ENCODE measurements at regions of chr11 and their contacts with region 1.

Region 1: DNA sequence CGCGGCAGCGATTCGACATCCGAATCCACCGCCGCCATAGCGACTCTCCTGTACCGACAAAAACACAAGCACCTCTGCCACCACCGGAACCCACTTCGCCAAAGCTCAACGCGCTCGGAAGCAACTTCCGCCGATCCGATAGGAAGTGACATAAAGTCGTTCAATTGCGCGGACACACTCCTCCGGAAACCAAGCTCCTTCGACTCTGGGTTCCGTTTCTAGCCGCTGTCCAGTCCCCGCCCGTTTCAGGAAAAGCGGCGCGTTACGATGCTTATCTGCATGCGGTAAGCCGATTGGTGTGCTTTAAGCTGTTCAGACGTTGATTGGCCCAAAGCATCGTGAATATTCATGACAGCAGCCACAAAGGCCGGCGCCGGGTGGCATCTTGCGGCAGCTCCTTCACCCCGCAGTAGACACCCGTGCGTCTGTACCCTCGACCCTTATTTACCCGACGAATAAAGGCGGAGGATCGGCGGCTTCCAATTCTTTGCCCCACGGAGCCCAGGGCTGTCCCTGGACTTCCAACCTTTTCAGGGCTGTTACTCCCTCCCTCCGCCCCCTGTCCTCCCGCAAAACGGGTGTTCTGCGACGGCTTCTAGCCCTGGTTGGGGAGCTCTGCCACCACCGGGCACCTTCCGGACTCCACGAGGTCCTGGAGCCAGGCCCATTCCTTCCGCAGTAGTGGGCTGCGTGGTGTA is at the start of gene TUT1:
- DNase-seq: peak; percentile 98
- ATAC-seq: peak; percentile 91
- H3K4me3 Mint-ChIP-seq: peak within 1 kb of the TSS; percentile 100
- H3K27ac Mint-ChIP-seq: peak within 1 kb of the TSS; percentile 98
- H3K4me1 Mint-ChIP-seq: peaks cover 49% of the 10 kb centered on the region
- H3K27me3 Mint-ChIP-seq: no peaks in the 10 kb centered on the region
- CTCF ChIP-seq: no peak
- total RNA-seq, gene TUT1: 34.4 to 38.0 TPM

Region 2: GRCh38 chr11:62444236-62444833 is 147.3 kb before region 1 on chr11:
- CTCF ChIA-PET with region 1: no interaction called
- POLR2A ChIA-PET with region 1: no interaction called
- intact Hi-C with region 1: no loop called
- DNase-seq: peak; percentile 36
- ATAC-seq: peak; percentile 30
- H3K4me3 Mint-ChIP-seq: peak overlapping the region; percentile 63
- H3K27ac Mint-ChIP-seq: no peak overlapping the region
- H3K4me1 Mint-ChIP-seq: peaks cover 9% of the 10 kb centered on the region
- H3K27me3 Mint-ChIP-seq: peaks cover 17% of the 10 kb centered on the region
- CTCF ChIP-seq: no peak

Region 3: DNA sequence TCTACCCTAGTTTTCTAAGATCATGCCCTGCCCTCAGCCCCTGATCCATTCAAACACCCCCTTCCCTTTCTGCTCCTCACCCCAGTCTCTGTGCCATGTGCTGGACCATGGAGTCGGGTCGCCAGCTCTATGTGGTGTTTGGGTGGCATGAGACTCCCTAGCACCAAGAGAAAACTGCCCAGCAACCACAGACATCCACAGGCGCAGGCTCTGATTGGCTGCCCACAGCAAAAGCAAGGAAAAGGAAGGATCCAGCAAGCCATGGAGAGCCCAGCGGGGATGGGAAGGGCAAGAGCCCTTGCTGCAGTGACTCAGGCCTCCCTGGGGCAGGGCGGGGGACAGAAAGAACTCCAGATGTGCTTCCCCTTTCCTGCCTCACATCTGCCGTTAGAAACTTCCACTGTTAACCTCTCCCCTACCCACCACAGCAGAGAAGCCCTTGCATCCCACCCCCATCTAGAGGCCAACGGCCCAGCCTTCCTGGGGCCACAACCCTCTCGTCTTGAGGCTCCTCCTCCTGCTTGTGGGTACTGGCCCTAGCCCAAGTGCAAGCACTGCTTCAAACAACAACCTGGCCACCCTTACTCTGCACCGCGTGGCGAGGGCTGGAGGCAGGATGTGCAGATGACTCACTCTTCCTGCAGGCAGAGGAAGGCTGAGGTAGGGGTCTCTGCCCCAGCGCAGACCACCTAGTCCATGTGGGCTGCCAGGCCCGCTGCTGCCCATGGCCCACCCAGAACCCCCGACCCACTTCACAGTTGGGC is 35.3 kb before region 1 on chr11:
- CTCF ChIA-PET with region 1: interaction called, 9 read pairs
- POLR2A ChIA-PET with region 1: interaction called, 17 read pairs
- intact Hi-C with region 1: no loop called
- DNase-seq: peak; percentile 95
- ATAC-seq: peak; percentile 68
- H3K4me3 Mint-ChIP-seq: peak overlapping the region; percentile 41
- H3K27ac Mint-ChIP-seq: peak overlapping the region; percentile 94
- H3K4me1 Mint-ChIP-seq: peaks cover 92% of the 10 kb centered on the region
- H3K27me3 Mint-ChIP-seq: no peaks in the 10 kb centered on the region
- CTCF ChIP-seq: no peak

Region 4: DNA sequence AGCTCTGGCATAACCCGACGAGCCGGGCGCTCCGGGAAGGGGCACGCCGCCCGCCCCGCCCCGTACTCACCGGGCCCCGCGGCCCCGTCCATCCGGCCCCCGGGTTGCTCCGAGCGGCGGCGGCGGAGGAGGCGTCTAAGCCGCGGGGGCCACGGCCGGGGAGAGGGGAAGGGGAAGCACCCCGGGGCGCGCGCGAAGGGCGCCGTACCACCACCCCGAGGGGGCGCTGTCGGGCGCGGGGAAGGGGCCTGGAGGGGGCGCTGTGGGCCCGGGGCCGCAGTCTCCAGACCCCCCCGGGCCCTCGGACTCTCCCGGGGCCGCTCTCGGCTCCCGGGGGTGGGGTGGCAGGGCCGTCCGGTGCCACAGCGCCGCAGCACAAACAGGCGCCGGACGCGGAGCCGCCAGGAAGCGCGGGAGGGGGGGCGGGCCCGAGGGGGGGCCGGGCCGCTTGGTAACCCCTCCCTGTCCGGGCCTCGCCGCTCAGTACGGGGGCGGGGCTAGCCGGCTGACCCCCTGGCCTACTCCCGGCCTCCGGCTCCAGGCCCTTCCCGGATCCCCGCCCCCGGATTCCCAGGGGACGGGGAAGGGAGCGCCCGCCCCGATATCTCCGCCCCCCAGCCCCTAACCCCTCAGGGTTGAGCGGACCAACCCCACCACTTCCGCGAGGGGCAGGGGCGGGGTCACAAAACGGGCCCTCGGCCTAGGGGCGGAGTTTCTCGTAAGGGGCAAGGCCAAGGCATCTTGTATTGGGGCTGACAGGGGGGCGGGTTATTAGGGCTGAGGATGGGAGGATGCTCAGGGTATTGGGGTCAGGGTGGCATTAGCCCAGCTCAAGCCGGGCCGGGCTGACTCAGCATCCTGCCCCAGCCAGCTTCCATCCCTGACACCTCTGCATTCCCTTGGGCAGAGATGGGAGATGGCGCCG is 21.0 kb after region 1 on chr11 and contains the starts of genes EML3 and ROM1:
- CTCF ChIA-PET with region 1: interaction called, 20 read pairs
- POLR2A ChIA-PET with region 1: interaction called, 87 read pairs
- intact Hi-C with region 1: no loop called
- DNase-seq: peak; percentile 92
- ATAC-seq: peak; percentile 80
- H3K4me3 Mint-ChIP-seq: peak within 1 kb of the TSS; percentile 96
- H3K27ac Mint-ChIP-seq: peak within 1 kb of the TSS; percentile 97
- H3K4me1 Mint-ChIP-seq: peaks cover 52% of the 10 kb centered on the region
- H3K27me3 Mint-ChIP-seq: no peaks in the 10 kb centered on the region
- CTCF ChIP-seq: peak; percentile 99
- total RNA-seq, gene EML3: 115 to 120 TPM
- total RNA-seq, gene ROM1: 0.79 to 1.1 TPM

Region 5: GRCh38 chr11:62645956-62646824 is 54.6 kb after region 1 on chr11 and contains the start of gene GANAB:
- CTCF ChIA-PET with region 1: interaction called, 3 read pairs
- POLR2A ChIA-PET with region 1: interaction called, 29 read pairs
- intact Hi-C with region 1: no loop called
- DNase-seq: peak; percentile 100
- ATAC-seq: peak; percentile 98
- H3K4me3 Mint-ChIP-seq: peak within 1 kb of the TSS; percentile 100
- H3K27ac Mint-ChIP-seq: peak within 1 kb of the TSS; percentile 99
- H3K4me1 Mint-ChIP-seq: peaks cover 30% of the 10 kb centered on the region
- H3K27me3 Mint-ChIP-seq: no peaks in the 10 kb centered on the region
- CTCF ChIP-seq: no peak
- total RNA-seq, gene GANAB: 205 to 217 TPM

Region 6: DNA sequence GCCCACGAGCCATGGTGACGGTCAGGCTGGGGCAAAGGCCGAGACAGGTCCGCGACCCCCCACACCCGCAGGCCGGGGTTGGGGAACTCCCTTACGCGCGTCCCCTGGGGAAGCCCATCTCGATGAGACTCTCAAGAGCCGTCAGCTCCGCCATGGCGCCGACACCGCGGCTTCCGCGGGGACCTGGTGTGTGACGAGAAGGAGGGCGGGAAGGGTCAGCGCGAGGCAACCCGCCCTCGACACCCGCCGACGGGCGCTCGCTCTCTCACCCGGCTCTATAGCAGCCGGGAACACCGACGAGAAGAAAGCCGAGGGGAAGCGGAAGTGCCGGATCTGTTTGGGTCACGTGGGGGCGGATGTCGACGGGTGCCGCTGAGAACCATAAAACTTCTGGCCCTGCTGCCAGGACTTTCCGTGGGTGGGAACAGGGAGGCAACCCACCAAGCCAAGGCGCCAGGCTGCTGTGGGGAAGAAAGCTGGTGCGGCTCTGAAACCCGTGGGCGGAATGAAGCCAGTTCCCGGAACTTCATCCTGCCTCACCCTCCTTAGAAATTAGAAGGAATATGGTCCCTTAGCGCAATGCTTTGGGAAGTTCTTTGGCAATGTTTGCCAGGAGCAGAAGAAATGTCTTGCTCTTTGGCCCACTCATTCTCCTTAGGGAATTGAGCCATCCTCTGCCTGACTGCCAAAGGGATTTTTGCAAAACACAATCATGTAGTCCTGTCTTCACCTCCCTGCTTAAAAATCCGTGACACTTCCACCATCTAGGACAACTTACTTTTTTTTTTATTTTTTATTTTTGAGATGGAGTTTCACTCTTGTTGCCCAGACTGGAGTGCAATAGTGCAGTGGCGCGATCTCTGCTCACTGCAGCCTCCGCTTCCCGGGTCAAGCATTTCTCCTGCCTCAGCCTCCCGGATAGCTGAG is 87.4 kb after region 1 on chr11 and contains the start of gene UBXN1:
- CTCF ChIA-PET with region 1: interaction called, 14 read pairs
- POLR2A ChIA-PET with region 1: interaction called, 48 read pairs
- intact Hi-C with region 1: no loop called
- DNase-seq: peak; percentile 94
- ATAC-seq: peak; percentile 76
- H3K4me3 Mint-ChIP-seq: peak within 1 kb of the TSS; percentile 86
- H3K27ac Mint-ChIP-seq: peak within 1 kb of the TSS; percentile 93
- H3K4me1 Mint-ChIP-seq: peaks cover 29% of the 10 kb centered on the region
- H3K27me3 Mint-ChIP-seq: no peaks in the 10 kb centered on the region
- CTCF ChIP-seq: no peak
- total RNA-seq, gene UBXN1: 104 to 120 TPM

Region 7: GRCh38 chr11:62787005-62787759 is 195.6 kb after region 1 on chr11 and contains the start of gene TMEM179B:
- CTCF ChIA-PET with region 1: interaction called, 10 read pairs
- POLR2A ChIA-PET with region 1: interaction called, 3 read pairs
- intact Hi-C with region 1: no loop called
- DNase-seq: peak; percentile 100
- ATAC-seq: peak; percentile 75
- H3K4me3 Mint-ChIP-seq: peak within 1 kb of the TSS; percentile 95
- H3K27ac Mint-ChIP-seq: peak within 1 kb of the TSS; percentile 95
- H3K4me1 Mint-ChIP-seq: peaks cover 41% of the 10 kb centered on the region
- H3K27me3 Mint-ChIP-seq: no peaks in the 10 kb centered on the region
- CTCF ChIP-seq: peak; percentile 69
- total RNA-seq, gene TMEM179B: 18.6 to 19.5 TPM